ENCODE measurements at regions of chr20 and their contacts with region 1.

Region 1: GRCh38 chr20:16476032-16476431 is 97.2 kb downstream of the KIF16B start:
- DNase-seq: peak; percentile 23 to 49 (median 26)
- ATAC-seq: peak; percentile 70
- H3K4me3 ChIP-seq: no peak overlapping the region
- H3K27ac ChIP-seq: no peak overlapping the region
- H3K4me1 ChIP-seq: peaks cover 0 to 18% of the 10 kb centered on the region in 2 experiments; a peak in 2 of 5 replicates
- H3K27me3 ChIP-seq: no peaks in the 10 kb centered on the region
- CTCF ChIP-seq: peak; percentile 25 to 68 (median 51); a peak in 5 of 6 replicates
- EP300 ChIP-seq: no peak
- POLR2A ChIP-seq: no peak
- RAD21 ChIP-seq: peak; percentile 54 to 73

Region 2: DNA sequence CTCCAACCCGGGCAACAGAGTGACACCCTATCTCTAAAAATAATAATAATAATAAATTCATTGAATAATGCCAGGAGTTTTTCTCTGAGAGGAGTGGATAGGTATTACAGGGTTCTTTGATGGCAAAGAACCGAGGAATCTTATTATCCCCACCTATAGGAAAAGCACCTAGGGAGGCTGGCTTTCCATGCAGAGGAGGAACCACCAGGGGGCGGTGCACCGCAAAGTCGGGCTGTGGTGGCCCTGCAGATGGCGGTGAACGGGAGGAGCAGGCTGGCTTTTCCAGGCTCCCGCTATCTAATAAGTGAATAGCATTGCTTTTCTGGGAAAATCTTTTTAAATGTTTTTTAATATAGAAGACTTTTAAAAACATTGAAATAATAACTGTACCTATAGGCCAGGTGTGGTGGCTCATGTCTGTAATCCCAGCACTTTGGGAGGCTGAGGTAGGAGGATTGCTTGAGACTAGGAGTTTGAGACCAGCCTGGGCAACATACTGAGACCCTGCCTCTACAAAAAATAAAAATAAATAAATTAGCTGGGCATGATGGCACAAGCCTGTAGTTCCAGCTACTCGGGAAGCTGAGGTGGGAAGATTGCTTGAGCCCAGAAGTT is 766.9 kb before region 1 on chr20:
- CTCF ChIA-PET with region 1: no interaction called
- POLR2A ChIA-PET with region 1: no interaction called
- in situ Hi-C with region 1: no loop called
- intact Hi-C with region 1: loop called (anchors 5 kb)
- DNase-seq: peak; percentile 26 to 39 (median 29)
- ATAC-seq: peak; percentile 61; the same call in 2 of the 3 replicates
- H3K4me3 ChIP-seq: no peak overlapping the region
- H3K27ac ChIP-seq: no peak overlapping the region
- H3K4me1 ChIP-seq: no peaks in the 10 kb centered on the region
- H3K27me3 ChIP-seq: no peaks in the 10 kb centered on the region
- CTCF ChIP-seq: peak; percentile 47
- EP300 ChIP-seq: no peak
- POLR2A ChIP-seq: no peak
- RAD21 ChIP-seq: peak; percentile 49 to 56

Region 3: GRCh38 chr20:16260911-16261310 is 215.1 kb before region 1 on chr20:
- CTCF ChIA-PET with region 1: no interaction called
- POLR2A ChIA-PET with region 1: no interaction called
- in situ Hi-C with region 1: no loop called
- intact Hi-C with region 1: loop called (anchors 10 kb)
- DNase-seq: no peak
- ATAC-seq: no peak
- H3K4me3 ChIP-seq: no peak overlapping the region
- H3K27ac ChIP-seq: no peak overlapping the region
- H3K4me1 ChIP-seq: peaks cover 4 to 9% of the 10 kb centered on the region in 2 experiments; a peak in 4 of 5 replicates
- H3K27me3 ChIP-seq: no peaks in the 10 kb centered on the region
- CTCF ChIP-seq: no peak
- EP300 ChIP-seq: no peak
- POLR2A ChIP-seq: no peak
- RAD21 ChIP-seq: no peak

Region 4: GRCh38 chr20:16352321-16352720 is 123.7 kb before region 1 on chr20:
- CTCF ChIA-PET with region 1: no interaction called
- POLR2A ChIA-PET with region 1: no interaction called
- in situ Hi-C with region 1: no loop called
- intact Hi-C with region 1: loop called (anchors 1 kb)
- DNase-seq: peak; percentile 3 to 16 (median 8)
- ATAC-seq: peak; percentile 64; the same call in 2 of the 3 replicates
- H3K4me3 ChIP-seq: no peak overlapping the region
- H3K27ac ChIP-seq: no peak overlapping the region
- H3K4me1 ChIP-seq: no peaks in the 10 kb centered on the region
- H3K27me3 ChIP-seq: no peaks in the 10 kb centered on the region
- CTCF ChIP-seq: peak in 2 of 3 experiments; percentile 20 to 46; a peak in 2 of 6 replicates
- EP300 ChIP-seq: no peak
- POLR2A ChIP-seq: no peak
- RAD21 ChIP-seq: no peak

Measured in K562 (cell line).